ENCODE measurements at regions of chr10 and their contacts with region 1.

Region 1: DNA sequence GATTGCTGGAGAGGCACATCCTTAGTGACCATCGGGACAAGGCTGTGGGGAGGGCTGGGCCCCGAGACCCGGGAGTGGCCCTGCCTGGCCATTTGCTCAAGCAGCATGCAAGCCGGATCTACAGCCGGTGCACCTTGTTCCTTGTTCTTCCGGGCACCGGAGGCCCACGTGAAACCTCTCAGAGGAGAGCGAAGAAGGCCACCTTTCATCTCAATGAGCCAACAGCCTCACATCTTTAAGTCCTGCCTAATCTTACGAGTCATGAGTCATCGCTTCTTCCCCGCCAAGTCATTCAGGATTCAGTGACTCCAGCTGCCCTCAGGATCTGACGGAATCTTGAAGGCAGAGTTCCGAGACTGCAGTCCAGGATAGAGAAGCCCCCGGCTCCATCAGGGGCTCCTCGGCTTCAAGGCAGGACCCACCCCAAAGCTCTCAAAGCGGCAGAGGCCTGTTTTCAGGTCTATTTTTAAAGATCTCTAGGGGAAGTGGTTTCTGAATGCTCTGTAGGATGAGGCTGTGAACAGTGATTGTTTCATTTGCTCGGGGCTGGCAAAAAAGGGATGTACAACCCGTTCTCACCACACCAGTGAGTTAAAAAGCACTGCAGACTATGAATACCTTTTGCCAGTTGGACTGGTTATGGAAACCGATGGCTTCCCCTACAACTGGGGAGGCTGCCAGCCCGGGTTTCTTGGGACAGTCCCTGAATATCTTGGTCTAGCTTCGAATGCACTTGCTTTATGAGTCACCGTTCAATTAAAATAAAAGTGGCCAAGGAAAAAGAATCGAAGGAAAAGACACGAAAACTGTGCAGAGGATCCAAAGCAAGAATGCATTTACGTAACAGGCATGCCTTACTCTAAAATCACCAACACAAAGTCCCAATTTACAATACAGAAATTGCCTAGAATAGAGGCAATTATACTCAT is 57.2 kb upstream of the ECHDC3 start:
- DNase-seq: peak; percentile 87
- H3K4me3 Mint-ChIP-seq: peak overlapping the region; percentile 85
- H3K27ac Mint-ChIP-seq: peak overlapping the region; percentile 88
- H3K4me1 Mint-ChIP-seq: peaks cover 21% of the 10 kb centered on the region
- H3K27me3 Mint-ChIP-seq: peaks cover 57% of the 10 kb centered on the region

Region 2: DNA sequence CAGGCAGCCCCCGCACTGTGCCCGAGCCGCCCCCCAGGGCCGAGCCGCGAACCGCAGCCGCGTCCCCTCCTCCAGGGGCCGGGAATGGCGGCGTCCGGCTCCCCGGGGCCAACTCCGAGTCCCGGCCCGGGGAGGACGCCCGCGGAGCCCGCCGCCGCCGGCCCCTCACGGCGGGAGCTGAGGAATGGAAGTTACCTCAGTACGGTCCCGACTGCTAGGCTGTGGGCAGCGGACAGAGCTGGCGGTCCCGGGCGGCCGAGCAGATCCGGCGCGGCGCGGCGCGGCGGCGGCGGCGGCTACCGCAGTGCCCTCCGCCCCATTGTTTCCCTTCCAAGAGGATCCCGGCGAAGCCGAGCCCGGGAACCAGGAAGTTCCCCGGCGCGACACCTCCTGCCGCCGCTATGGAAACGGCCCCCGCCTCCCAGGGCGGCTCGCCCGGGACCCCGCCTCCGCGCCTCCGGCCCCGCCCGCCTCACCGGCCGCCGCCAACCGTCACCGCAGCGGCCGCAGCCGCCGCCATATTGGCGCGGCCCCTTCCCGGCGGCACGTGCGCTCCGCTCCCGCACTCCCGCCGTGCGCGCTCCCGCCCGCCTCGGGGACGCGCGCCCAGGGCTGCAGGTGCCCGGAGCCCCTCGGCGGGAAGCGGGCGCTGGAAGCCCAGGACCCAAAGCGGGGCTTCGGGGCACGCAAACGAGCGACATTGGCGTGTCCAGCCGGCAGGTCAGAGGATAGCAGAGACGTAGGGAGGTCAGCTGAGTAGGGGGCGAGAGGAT is 73.5 kb before region 1 on chr10 and contains the start of gene USP6NL:
- intact Hi-C with region 1: loop called (anchors 5 kb)
- DNase-seq: peak; percentile 90
- H3K4me3 Mint-ChIP-seq: peak within 1 kb of the TSS; percentile 85
- H3K27ac Mint-ChIP-seq: peak within 1 kb of the TSS; percentile 72
- H3K4me1 Mint-ChIP-seq: peaks cover 18% of the 10 kb centered on the region
- H3K27me3 Mint-ChIP-seq: peaks cover 57% of the 10 kb centered on the region
- total RNA-seq, gene USP6NL: 0.83 and 0.84 TPM in 2 replicates

Region 3: GRCh38 chr10:11631890-11632587 is 52.9 kb before region 1 on chr10:
- intact Hi-C with region 1: loop called (anchors 1 kb)
- DNase-seq: peak; percentile 81
- H3K4me3 Mint-ChIP-seq: peak overlapping the region; percentile 27
- H3K27ac Mint-ChIP-seq: peak overlapping the region; percentile 22
- H3K4me1 Mint-ChIP-seq: peaks cover 6% of the 10 kb centered on the region
- H3K27me3 Mint-ChIP-seq: peaks cover 49% of the 10 kb centered on the region

Region 4: DNA sequence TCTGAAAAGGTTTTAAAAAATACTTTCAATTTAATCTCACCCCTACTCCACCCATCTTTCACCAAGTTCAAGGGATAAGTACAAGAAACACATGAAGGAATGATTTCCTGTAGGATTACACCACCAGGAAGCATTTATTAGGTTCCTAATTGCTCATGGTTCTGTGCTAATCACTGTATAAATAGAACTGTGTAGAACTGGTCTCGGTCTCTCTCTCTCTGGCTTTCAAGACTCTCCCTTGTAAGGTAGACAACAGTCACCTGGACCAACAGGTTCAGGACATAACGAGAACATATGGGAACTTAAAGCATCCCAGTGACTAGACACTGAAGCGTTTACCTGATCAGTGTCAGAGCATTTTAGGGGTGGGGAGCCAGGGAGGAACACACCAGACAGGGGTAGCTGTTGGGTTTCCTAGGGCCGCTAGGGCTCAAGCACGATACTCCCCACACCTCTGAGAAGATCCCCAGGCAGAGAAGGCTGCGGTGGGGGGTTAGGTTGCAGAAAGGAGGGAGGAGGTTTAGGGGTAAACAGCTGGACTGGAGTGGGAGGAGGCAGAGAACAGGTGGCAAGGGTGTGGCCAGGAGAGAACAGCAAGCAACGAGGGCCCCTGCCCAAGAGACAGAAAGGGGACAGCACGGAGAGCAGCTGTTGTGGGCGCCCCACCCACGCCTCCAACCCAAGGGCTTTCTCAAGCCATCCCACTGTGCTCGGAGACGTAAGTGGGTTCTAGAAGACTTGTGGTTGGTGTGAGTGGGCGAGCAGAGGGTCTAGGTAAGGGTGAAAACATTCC is 21.0 kb before region 1 on chr10:
- intact Hi-C with region 1: no loop called
- DNase-seq: no peak
- H3K4me3 Mint-ChIP-seq: no peak overlapping the region
- H3K27ac Mint-ChIP-seq: no peak overlapping the region
- H3K4me1 Mint-ChIP-seq: peaks cover 4% of the 10 kb centered on the region
- H3K27me3 Mint-ChIP-seq: peaks cover 21% of the 10 kb centered on the region

Region 5: GRCh38 chr10:11713186-11713743 is 28.3 kb after region 1 on chr10:
- intact Hi-C with region 1: loop called (anchors 1 kb)
- DNase-seq: no peak
- H3K4me3 Mint-ChIP-seq: no peak overlapping the region
- H3K27ac Mint-ChIP-seq: no peak overlapping the region
- H3K4me1 Mint-ChIP-seq: peaks cover 18% of the 10 kb centered on the region
- H3K27me3 Mint-ChIP-seq: peaks cover 71% of the 10 kb centered on the region

Region 6: DNA sequence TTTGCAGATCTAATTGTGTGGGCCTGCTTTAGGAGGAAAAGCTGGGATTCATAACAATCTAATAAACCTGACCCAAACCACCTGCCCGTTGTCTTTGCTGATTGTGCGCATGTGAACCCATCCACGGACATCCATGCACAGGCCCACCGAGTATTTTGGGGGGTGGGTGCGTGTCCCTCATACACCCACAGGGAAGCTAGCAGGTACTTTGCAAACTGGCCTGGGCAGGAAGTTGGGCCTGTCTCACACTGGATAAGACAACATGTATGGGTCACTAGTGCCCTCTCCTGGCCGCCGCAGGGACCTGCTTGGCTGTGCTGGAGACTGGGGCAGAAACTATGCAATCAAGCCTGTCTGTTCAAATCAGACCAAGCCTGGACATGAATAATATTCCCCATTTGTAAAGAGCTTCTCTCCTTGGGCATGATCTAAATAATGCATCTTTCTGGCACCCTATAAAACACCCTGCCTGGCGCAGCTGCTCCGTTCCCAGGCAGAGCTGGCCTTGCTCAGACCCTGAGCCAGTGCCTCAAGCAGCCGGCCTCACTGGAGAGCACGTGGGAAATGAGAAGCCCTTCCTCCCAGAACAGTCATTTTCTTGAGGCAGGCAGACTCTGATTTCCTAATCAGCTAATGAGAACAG is 73.0 kb after region 1 on chr10:
- intact Hi-C with region 1: loop called (anchors 5 kb)
- DNase-seq: peak; percentile 95
- H3K4me3 Mint-ChIP-seq: no peak overlapping the region
- H3K27ac Mint-ChIP-seq: no peak overlapping the region
- H3K4me1 Mint-ChIP-seq: peaks cover 4% of the 10 kb centered on the region
- H3K27me3 Mint-ChIP-seq: peaks cover 20% of the 10 kb centered on the region

Measured in activated CD4-positive, alpha-beta T cell treated with anti-CD3 and anti-CD28 coated beads, Interleukin-2, amount 10 ng/mL, durations not matched to agents 24 days and 14 days (primary cell).